Psoas muscle (tissue), 8 donors: ENCODE measurements at regions of chr6 and their contacts with region 1.

Region 1: DNA sequence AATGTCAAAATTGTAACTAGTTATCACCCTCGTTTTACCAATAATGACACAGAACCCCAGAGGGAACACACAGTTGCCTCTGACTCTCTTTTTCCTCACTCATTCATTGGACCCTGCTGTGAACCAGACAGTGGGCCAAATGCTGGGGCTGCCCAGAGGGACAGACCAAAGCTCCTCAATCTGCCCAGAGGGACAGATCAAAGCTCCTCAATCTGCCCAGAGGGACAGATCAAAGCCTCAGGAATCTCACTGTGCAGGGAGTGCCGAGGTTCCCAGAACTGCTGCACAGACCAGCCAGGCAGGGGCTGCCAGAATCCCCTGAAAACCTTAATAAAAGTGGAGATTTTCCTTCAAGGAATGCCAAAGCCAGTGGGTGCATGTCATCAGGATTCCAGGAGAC is 179.1 kb downstream of the SOD2 start:
- DNase-seq: no peak
- ATAC-seq: peak in 1 of 4 donors; percentile 26
- H3K4me3 ChIP-seq: no peak overlapping the region
- H3K27ac ChIP-seq: no peak overlapping the region
- H3K4me1 ChIP-seq: no peaks in the 10 kb centered on the region
- H3K27me3 ChIP-seq: no peaks in the 10 kb centered on the region
- CTCF ChIP-seq: no peak

Region 2: DNA sequence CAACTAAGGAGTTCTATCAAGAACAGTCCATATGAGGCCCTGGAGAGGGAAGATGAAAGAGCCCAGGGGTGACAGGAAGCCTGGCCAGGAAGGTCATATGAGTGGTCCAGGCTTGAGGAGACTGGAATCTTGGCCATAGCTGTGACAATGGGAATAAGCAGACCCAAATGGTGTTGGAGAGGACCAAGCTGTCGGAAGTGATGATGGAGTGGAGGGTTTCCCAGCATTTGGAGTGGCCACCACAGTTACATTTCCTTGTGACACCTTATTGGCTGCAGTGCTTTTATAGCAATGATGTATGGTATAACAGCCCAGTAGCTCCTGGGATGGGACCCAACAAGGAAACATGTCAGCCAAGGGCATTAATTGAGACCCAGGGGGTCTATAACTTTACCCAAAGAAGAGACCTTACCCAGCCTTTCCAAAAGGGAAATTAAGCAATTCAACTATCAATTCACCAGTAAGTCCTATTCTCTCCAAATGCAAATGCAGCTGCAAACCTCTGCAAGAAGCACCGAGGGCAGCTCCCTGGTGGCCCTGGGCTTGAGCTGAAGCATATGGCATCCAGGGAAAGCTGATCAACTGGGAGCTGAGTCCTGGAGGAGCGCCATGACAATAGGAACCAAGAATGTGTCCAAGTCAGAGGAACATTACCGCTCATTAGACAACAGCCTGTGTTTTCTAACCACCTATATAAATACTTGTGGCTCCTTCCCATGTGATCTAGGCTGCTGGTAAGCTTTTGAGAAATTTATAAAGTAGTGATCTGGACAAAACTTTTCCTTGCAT is 40.2 kb before region 1 on chr6:
- intact Hi-C with region 1: loop called in 1 of 2 experiments (anchors 2 kb)
- DNase-seq: no peak
- ATAC-seq: peak in 1 of 4 donors; percentile 32
- H3K4me3 ChIP-seq: no peak overlapping the region
- H3K27ac ChIP-seq: no peak overlapping the region
- H3K4me1 ChIP-seq: no peaks in the 10 kb centered on the region
- H3K27me3 ChIP-seq: no peaks in the 10 kb centered on the region
- CTCF ChIP-seq: no peak